ENCODE measurements at regions of chr6 and their contacts with region 1.

Region 1: GRCh38 chr6:36765594-36766398 is 68.2 kb downstream of the RAB44 start:
- DNase-seq: no peak
- H3K4me3 ChIP-seq: no peak overlapping the region
- H3K27me3 ChIP-seq: no peaks in the 10 kb centered on the region
- CTCF ChIP-seq: peak; percentile 97

Region 2: GRCh38 chr6:36067374-36068011 is 698.3 kb before region 1 on chr6:
- CTCF ChIA-PET with region 1: no interaction called
- POLR2A ChIA-PET with region 1: no interaction called
- DNase-seq: no peak
- H3K4me3 ChIP-seq: no peak overlapping the region
- H3K27me3 ChIP-seq: no peaks in the 10 kb centered on the region
- CTCF ChIP-seq: no peak

Region 3: DNA sequence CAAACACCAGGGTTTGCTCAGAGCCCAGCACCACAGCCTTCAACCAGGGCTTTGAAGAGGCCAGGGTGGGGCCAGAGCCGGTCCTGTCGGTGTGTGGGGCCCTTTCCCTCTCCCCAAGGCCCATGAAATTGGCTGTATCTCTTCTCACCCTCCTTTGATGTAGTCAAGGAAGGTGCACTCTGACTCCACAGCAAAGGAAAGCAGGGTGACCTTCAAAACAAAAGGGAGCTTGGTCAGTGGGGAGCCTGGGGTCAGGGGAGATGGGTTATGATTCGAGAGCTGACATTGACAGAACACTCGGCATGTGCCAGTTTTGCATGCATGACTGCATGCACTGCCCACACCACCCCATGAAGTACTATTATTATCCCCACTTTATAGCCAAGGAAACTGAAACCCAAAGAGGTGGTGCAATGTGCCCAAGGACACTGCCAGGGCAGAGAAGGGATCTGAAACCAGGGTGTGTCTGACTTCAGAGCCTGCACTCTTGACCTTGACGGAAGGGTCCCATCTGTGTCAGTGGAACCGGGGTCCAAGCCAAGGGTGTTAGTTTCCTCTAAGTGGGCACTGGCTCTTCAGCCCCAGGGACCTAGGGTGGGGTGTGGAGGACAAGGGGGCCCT is 12.8 kb before region 1 on chr6:
- CTCF ChIA-PET with region 1: interaction called, 37 read pairs
- POLR2A ChIA-PET with region 1: no interaction called
- DNase-seq: no peak
- H3K4me3 ChIP-seq: no peak overlapping the region
- H3K27me3 ChIP-seq: no peaks in the 10 kb centered on the region; the same call in 1 of the 2 replicates
- CTCF ChIP-seq: no peak

Region 4: GRCh38 chr6:36851149-36851614 is 85.4 kb after region 1 on chr6:
- CTCF ChIA-PET with region 1: interaction called, 194 read pairs
- POLR2A ChIA-PET with region 1: no interaction called
- DNase-seq: peak; percentile 58
- H3K4me3 ChIP-seq: no peak overlapping the region
- H3K27me3 ChIP-seq: no peaks in the 10 kb centered on the region
- CTCF ChIP-seq: peak; percentile 73

Region 5: GRCh38 chr6:36874443-36875249 is 108.8 kb after region 1 on chr6 and contains the start of gene PPIL1:
- CTCF ChIA-PET with region 1: interaction called, 21 read pairs
- POLR2A ChIA-PET with region 1: no interaction called
- DNase-seq: no peak
- H3K4me3 ChIP-seq: peak within 1 kb of the TSS; percentile 55
- H3K27me3 ChIP-seq: no peaks in the 10 kb centered on the region
- CTCF ChIP-seq: no peak
- polyA plus RNA-seq, gene PPIL1: 23.4 and 34.8 TPM in 2 replicates

Region 6: DNA sequence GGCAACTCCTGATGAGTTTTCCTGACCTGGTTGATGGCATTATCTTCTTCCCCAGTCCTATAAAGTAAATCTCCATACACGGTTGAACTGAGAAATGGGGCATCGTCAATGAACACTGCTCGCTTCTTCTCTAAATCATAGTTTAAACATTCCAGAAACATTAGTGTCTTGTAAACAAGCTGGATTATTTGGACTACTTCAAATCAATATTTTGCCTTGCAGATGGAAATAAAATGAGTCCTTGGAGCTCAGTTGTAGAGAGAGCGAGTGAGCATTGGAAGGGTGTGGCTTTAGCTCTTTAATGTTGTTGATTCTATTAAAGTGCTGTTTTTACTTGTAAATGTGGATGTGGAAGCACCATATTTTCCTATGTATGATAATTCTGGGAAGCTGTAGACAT is 138.3 kb after region 1 on chr6:
- CTCF ChIA-PET with region 1: interaction called, 12 read pairs
- POLR2A ChIA-PET with region 1: no interaction called
- DNase-seq: no peak
- H3K4me3 ChIP-seq: no peak overlapping the region
- H3K27me3 ChIP-seq: no peaks in the 10 kb centered on the region
- CTCF ChIP-seq: no peak

Region 7: DNA sequence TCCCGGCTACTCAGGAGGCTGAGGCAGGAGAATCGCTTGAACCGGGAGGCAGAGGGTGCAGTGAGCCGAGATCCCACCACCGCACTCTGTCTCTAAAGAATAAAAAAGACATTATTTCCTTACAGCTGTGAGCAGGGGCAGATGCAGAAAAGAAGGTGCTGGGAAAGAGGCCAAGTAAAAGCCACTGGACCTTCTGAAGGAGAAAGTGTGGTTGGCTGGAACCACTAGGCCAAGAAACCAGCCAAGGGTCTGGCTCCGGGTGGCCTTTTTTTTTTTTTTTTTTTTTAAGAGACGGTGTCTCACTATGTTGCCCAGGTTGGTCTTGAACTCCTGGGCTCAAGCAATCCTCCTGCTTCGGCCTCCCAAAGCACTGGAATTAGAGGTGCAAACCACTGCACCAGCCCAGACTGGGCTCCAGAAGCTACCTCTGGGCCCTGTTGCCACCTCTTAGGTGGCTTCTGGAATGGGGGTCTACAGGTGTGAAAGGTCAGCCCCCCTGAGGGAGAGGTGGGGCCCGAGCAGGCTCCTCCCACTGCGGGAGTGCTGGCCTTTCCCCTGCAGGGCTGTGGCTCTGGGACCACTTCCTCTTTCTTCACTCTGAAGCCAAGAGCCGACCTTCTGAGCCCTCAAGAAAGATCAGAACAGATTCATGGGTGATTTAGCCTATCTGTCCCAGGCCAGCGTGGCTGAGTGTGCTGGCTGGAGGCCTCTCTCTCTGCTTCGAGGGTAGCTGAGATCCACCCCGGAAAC is 239.4 kb after region 1 on chr6 and contains the start of gene FGD2:
- CTCF ChIA-PET with region 1: interaction called, 298 read pairs
- POLR2A ChIA-PET with region 1: no interaction called
- DNase-seq: no peak
- H3K4me3 ChIP-seq: no peak within 1 kb of the TSS
- H3K27me3 ChIP-seq: peaks cover 2% of the 10 kb centered on the region
- CTCF ChIP-seq: no peak
- polyA plus RNA-seq, gene FGD2: not detected in 2 replicates